GM12878 (cell line): ENCODE measurements at regions of chr2 and their contacts with region 1.

Region 1: DNA sequence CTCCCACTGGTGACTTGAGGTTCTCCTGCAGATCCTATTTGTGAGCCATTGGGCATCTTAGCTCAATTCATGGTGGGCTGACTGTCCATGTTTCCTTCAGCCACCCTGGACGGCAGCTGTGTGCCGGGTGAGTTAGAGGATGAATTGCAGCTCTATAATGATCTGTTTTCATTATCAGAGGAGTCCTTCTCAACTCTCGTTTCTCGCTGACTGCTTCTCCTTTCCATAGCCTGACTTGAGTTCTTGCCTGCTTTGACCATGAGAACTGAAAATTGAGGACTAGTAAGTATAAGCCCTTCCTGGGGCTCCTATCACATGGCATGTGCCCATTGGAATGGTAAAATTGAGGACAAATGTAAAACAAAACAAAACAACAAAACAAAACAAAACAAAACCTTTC is 121.8 kb downstream of the CDC42EP3 start:
- DNase-seq: no peak
- ATAC-seq: peak; percentile 87
- H3K4me3 ChIP-seq: peak overlapping the region; percentile 4; the same call in 1 of the 2 replicates
- H3K27ac ChIP-seq: peak overlapping the region; percentile 95
- H3K4me1 ChIP-seq: peaks cover 36% of the 10 kb centered on the region
- H3K27me3 ChIP-seq: no peaks in the 10 kb centered on the region
- CTCF ChIP-seq: no peak
- EP300 ChIP-seq: no peak
- POLR2A ChIP-seq: no peak
- RAD21 ChIP-seq: no peak

Region 2: DNA sequence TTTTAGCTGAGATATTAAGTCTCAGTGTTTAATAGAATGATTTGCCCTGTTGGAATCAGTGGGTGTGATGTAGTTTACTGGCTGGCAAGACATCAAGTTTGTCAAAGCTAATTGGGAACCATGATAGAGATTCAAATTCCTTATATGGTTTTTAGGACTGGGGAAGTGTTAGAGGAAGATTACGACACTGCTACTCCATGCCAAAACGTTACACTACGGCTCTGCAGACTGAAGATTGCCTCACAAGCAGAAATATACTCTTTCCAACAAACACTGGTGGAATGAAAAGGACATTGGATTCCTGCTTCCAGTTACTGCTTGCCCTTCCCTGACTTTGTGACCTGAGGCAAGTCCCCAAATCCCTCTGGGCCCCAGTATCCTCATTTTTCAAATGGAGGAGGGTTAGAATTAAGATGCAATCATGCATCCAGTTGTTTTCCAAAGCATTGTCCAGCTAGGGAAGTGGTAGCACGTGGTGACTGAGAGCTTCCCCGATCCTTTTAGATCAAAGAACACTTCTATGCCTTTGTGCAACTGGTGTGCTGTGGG is 25.7 kb before region 1 on chr2:
- CTCF ChIA-PET with region 1: interaction called, 4 read pairs
- POLR2A ChIA-PET with region 1: no interaction called
- RAD21 ChIA-PET with region 1: no interaction called
- SMC1A ChIA-PET with region 1: interaction called, 10 read pairs
- in situ Hi-C with region 1: no loop called
- intact Hi-C with region 1: no loop called
- DNase-seq: no peak
- ATAC-seq: no peak
- H3K4me3 ChIP-seq: no peak overlapping the region
- H3K27ac ChIP-seq: no peak overlapping the region
- H3K4me1 ChIP-seq: no peaks in the 10 kb centered on the region
- H3K27me3 ChIP-seq: no peaks in the 10 kb centered on the region
- CTCF ChIP-seq: no peak
- EP300 ChIP-seq: no peak
- POLR2A ChIP-seq: no peak
- RAD21 ChIP-seq: no peak

Region 3: GRCh38 chr2:37537316-37537715 is 12.3 kb before region 1 on chr2:
- CTCF ChIA-PET with region 1: interaction called, 35 read pairs
- POLR2A ChIA-PET with region 1: interaction called, 6 read pairs
- RAD21 ChIA-PET with region 1: interaction called, 4 read pairs
- SMC1A ChIA-PET with region 1: interaction called, 44 read pairs
- in situ Hi-C with region 1: no loop called
- intact Hi-C with region 1: no loop called
- DNase-seq: no peak
- ATAC-seq: no peak
- H3K4me3 ChIP-seq: no peak overlapping the region
- H3K27ac ChIP-seq: no peak overlapping the region
- H3K4me1 ChIP-seq: no peaks in the 10 kb centered on the region
- H3K27me3 ChIP-seq: no peaks in the 10 kb centered on the region
- CTCF ChIP-seq: no peak
- EP300 ChIP-seq: no peak
- POLR2A ChIP-seq: no peak
- RAD21 ChIP-seq: no peak

Region 4: GRCh38 chr2:37615804-37616676 is 66.4 kb after region 1 on chr2:
- CTCF ChIA-PET with region 1: interaction called, 10 read pairs
- POLR2A ChIA-PET with region 1: interaction called, 9 read pairs
- RAD21 ChIA-PET with region 1: interaction called, 95 read pairs
- SMC1A ChIA-PET with region 1: interaction called, 97 read pairs
- in situ Hi-C with region 1: no loop called
- intact Hi-C with region 1: no loop called
- DNase-seq: no peak
- ATAC-seq: peak; percentile 58
- H3K4me3 ChIP-seq: no peak overlapping the region
- H3K27ac ChIP-seq: peak overlapping the region; percentile 72
- H3K4me1 ChIP-seq: peaks cover 17% of the 10 kb centered on the region
- H3K27me3 ChIP-seq: no peaks in the 10 kb centered on the region
- CTCF ChIP-seq: no peak
- EP300 ChIP-seq: no peak
- POLR2A ChIP-seq: no peak
- RAD21 ChIP-seq: no peak

Region 5: GRCh38 chr2:37641582-37642171 is 92.1 kb after region 1 on chr2:
- CTCF ChIA-PET with region 1: no interaction called
- POLR2A ChIA-PET with region 1: no interaction called
- RAD21 ChIA-PET with region 1: no interaction called
- SMC1A ChIA-PET with region 1: interaction called, 10 read pairs
- in situ Hi-C with region 1: no loop called
- intact Hi-C with region 1: no loop called
- DNase-seq: no peak
- ATAC-seq: no peak
- H3K4me3 ChIP-seq: no peak overlapping the region
- H3K27ac ChIP-seq: no peak overlapping the region
- H3K4me1 ChIP-seq: peaks cover 15% of the 10 kb centered on the region
- H3K27me3 ChIP-seq: no peaks in the 10 kb centered on the region
- CTCF ChIP-seq: no peak
- EP300 ChIP-seq: no peak
- POLR2A ChIP-seq: no peak
- RAD21 ChIP-seq: no peak